ENCODE measurements at regions of chr4 and their contacts with region 1.

Region 1: GRCh38 chr4:99624141-99624719 is 33.4 kb downstream of the C4orf54 start:
- DNase-seq: no peak
- ATAC-seq: no peak
- H3K4me3 ChIP-seq: no peak overlapping the region
- H3K27ac ChIP-seq: peak overlapping the region in 1 of 12 donors; percentile 55
- H3K4me1 ChIP-seq: peaks cover 0 to 4% (median 0%) of the 10 kb centered on the region in 12 donors
- H3K27me3 ChIP-seq: no peaks in the 10 kb centered on the region
- CTCF ChIP-seq: no peak
- POLR2A ChIP-seq: no peak

Region 2: DNA sequence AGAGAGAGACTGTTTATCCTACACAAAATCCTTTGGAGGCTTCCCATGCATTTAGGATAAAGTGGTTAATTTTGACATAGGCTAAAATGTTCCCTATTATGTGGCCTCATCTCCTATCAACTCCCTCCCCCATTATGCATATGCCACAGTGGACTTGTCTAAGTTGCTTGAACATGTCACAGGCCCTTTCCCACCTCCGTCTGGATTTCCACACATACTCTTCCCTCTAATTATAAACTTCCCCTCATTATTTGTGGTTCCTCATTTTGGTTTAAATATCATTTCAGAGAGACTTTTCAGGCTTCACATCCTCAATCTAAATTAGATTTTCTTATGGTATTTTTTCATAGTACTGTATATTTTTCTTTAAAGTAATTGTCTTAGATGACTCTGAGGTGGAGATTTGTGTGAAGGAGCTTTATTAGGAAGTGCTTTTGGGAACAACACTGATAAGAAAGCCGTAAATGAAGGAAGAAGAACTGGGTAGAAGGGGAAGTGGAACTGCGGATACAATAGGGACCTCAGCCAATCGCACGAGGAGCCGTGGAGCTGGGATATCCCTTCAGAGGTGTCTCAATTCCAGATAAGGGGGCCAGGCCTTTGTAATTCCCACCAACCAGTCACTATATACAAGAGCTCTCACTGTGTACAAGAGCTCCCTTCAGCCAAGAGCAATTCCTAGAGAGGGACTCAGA is 105.5 kb before region 1 on chr4:
- intact Hi-C with region 1: no loop called
- DNase-seq: no peak
- ATAC-seq: no peak
- H3K4me3 ChIP-seq: no peak overlapping the region
- H3K27ac ChIP-seq: no peak overlapping the region
- H3K4me1 ChIP-seq: no peaks in the 10 kb centered on the region
- H3K27me3 ChIP-seq: peaks cover 0 to 7% (median 0%) of the 10 kb centered on the region in 9 donors
- CTCF ChIP-seq: no peak
- POLR2A ChIP-seq: no peak

Region 3: GRCh38 chr4:99655308-99656081 is 31.3 kb after region 1 on chr4:
- intact Hi-C with region 1: no loop called
- DNase-seq: peak; percentile 53 to 68 (median 59)
- ATAC-seq: peak; percentile 62 to 82 (median 72)
- H3K4me3 ChIP-seq: no peak overlapping the region
- H3K27ac ChIP-seq: peak overlapping the region in 11 of 12 donors; percentile 8 to 73 (median 56)
- H3K4me1 ChIP-seq: peaks cover 0 to 32% (median 5%) of the 10 kb centered on the region in 12 donors
- H3K27me3 ChIP-seq: no peaks in the 10 kb centered on the region
- CTCF ChIP-seq: no peak
- POLR2A ChIP-seq: no peak

Region 4: GRCh38 chr4:99679204-99679603 is 55.0 kb after region 1 on chr4:
- intact Hi-C with region 1: loop called in 1 of 10 experiments (anchors 10 kb)
- DNase-seq: peak in 4 of 5 donors; percentile 50 to 77 (median 60)
- ATAC-seq: peak; percentile 85 to 98 (median 96)
- H3K4me3 ChIP-seq: no peak overlapping the region
- H3K27ac ChIP-seq: peak overlapping the region in 8 of 12 donors; percentile 4 to 70 (median 54)
- H3K4me1 ChIP-seq: peaks cover 0 to 14% (median 4%) of the 10 kb centered on the region in 12 donors
- H3K27me3 ChIP-seq: no peaks in the 10 kb centered on the region
- CTCF ChIP-seq: peak in 4 of 12 donors; percentile 5 to 28 (median 8)
- POLR2A ChIP-seq: no peak